ENCODE measurements at regions of chr19 and their contacts with region 1.

Region 1: GRCh38 chr19:13833330-13834243 is 38.3 kb downstream of the ZSWIM4 start:
- DNase-seq: peak; percentile 96
- H3K4me3 Mint-ChIP-seq: peak overlapping the region; percentile 74
- H3K27ac Mint-ChIP-seq: peak overlapping the region; percentile 85
- H3K4me1 Mint-ChIP-seq: peaks cover 52% of the 10 kb centered on the region
- H3K27me3 Mint-ChIP-seq: no peaks in the 10 kb centered on the region

Region 2: GRCh38 chr19:13784731-13785452 is 48.7 kb before region 1 on chr19:
- CTCF ChIA-PET with region 1: interaction called, 12 read pairs
- DNase-seq: peak; percentile 81
- H3K4me3 Mint-ChIP-seq: peak overlapping the region; percentile 41
- H3K27ac Mint-ChIP-seq: peak overlapping the region; percentile 45
- H3K4me1 Mint-ChIP-seq: peaks cover 48% of the 10 kb centered on the region
- H3K27me3 Mint-ChIP-seq: no peaks in the 10 kb centered on the region

Region 3: DNA sequence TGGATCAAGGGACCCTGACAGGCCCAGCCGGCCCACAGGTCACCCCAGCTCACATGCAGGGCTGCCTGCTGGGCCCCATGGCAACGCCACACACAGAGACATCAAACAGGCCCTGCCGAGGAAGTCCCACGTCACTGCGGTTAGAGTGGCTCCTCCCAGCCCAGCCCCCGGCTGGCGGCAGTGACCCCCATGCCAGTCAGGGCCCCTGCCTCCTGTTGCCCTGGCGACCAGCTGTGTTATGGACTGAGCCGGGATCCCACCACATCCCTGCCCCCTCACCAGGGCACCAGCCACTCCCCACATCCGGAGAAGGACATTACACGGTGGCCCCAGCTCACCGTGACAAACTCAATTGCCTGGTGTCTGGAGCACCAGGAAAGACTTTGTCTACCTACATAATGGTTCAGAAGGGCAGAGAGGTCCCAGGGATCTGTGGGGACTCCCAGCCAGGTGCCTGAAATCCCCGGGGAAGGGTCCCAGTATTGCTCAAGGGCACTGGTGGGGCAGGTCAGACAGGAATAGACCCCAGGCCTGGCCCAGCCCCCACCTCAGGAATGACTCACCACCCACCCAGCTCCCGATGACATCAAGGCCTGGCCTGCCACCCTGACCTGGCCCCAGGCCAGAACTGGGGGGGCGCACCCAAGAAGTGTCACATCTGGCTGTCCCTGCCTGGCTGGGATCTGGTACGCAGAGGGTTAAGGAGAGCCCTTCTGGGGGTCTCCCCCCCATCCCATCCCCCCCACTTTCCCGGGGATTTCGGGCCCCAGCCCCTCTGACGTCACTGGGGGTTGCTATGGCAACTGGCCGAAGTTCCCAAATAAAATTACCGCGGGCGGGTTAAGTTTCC is 13.2 kb after region 1 on chr19:
- CTCF ChIA-PET with region 1: interaction called, 17 read pairs
- DNase-seq: peak; percentile 98
- H3K4me3 Mint-ChIP-seq: peak overlapping the region; percentile 72
- H3K27ac Mint-ChIP-seq: peak overlapping the region; percentile 96
- H3K4me1 Mint-ChIP-seq: peaks cover 69% of the 10 kb centered on the region
- H3K27me3 Mint-ChIP-seq: peaks cover 21% of the 10 kb centered on the region

Region 4: GRCh38 chr19:13880059-13881043 is 46.8 kb after region 1 on chr19:
- CTCF ChIA-PET with region 1: no interaction called
- DNase-seq: peak; percentile 98
- H3K4me3 Mint-ChIP-seq: peak overlapping the region; percentile 35
- H3K27ac Mint-ChIP-seq: peak overlapping the region; percentile 87
- H3K4me1 Mint-ChIP-seq: peaks cover 46% of the 10 kb centered on the region
- H3K27me3 Mint-ChIP-seq: peaks cover 24% of the 10 kb centered on the region

Region 5: GRCh38 chr19:13905938-13906904 is 72.6 kb after region 1 on chr19 and contains the starts of genes BRME1 and CC2D1A:
- CTCF ChIA-PET with region 1: no interaction called
- DNase-seq: peak; percentile 97
- H3K4me3 Mint-ChIP-seq: peak within 1 kb of the TSS; percentile 83
- H3K27ac Mint-ChIP-seq: peak within 1 kb of the TSS; percentile 84
- H3K4me1 Mint-ChIP-seq: peaks cover 41% of the 10 kb centered on the region
- H3K27me3 Mint-ChIP-seq: no peaks in the 10 kb centered on the region